ENCODE measurements at regions of chr12 and their contacts with region 1.

Region 1: GRCh38 chr12:132489602-132490239 is at the start of gene FBRSL1:
- DNase-seq: peak; percentile 78 to 84
- ATAC-seq: peak; percentile 77 to 84
- H3K4me3 ChIP-seq: peak within 1 kb of the TSS; percentile 62 to 92 (median 80)
- H3K27ac ChIP-seq: peak within 1 kb of the TSS; percentile 73 to 81 (median 78)
- H3K4me1 ChIP-seq: peaks cover 29 to 39% of the 10 kb centered on the region in 2 donors
- H3K27me3 ChIP-seq: no peaks in the 10 kb centered on the region
- CTCF ChIP-seq: no peak
- POLR2A ChIP-seq: peak; percentile 48 to 53
- total RNA-seq, gene FBRSL1: 8.4 to 29.4 (median 22.8) TPM

Region 2: GRCh38 chr12:132506328-132507160 is 16.8 kb after region 1 on chr12:
- in situ Hi-C with region 1: no loop called
- intact Hi-C with region 1: loop called (anchors 2 kb)
- DNase-seq: peak; percentile 67 to 84
- ATAC-seq: peak; percentile 81 to 83
- H3K4me3 ChIP-seq: peak overlapping the region; percentile 33 to 50 (median 43)
- H3K27ac ChIP-seq: peak overlapping the region; percentile 76 to 87 (median 80)
- H3K4me1 ChIP-seq: peaks cover 55 to 57% of the 10 kb centered on the region in 2 donors
- H3K27me3 ChIP-seq: no peaks in the 10 kb centered on the region
- CTCF ChIP-seq: no peak
- POLR2A ChIP-seq: no peak